Activated T-helper 1 cell treated with anti-CD3 and anti-CD28 coated beads, Interleukin-12 subunit alpha, Interleukin-12 subunit beta, Interleukin-2, Interleukin-4 antibody, amounts not matched to agents 30 ng/mL and 10 ng/mL and 1 ng/mL, durations not matched to agents 14 hours and 24 hours and 36 hours (primary cell): ENCODE measurements at regions of chr4 and their contacts with region 1.

Region 1: DNA sequence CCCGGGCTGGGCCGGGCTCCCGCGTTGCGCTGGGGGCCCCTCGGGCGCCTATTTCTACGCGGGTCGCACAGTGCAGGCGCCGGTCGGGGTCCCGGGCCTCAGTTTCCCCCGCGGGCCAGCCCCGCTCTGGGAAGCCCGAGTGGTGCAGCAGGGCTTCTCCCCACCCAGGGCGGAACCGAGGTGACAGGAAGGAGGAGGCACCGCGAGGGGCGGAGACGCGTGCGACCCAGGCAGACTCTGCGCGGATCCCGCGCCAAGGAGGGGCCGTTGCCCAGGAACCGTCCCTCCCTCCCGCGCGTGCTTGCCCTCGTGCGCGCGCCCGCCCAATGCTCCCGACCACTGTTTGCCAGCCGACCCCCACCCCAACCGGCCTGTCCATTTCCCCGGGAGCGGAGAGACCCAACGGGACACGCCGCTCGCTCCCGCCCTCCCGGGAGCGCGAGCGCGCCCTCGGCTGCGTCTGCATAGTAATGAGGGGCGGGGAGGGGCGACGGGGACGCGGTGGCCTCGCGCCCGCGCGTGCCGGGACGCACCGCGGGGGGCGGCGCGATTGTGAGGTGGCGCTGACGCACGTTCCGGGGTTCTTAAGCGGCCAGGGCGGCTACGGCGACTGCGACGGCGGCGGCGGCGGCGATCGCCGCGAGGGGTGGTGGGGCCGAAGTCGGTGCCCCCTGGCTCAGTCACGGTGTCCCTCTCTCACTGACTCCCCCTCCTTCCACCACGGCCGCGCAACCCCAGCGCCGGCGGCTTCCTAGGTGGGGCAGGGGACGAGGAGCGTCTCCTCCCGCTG is at the start of gene CPEB2:
- DNase-seq: peak; percentile 88
- H3K4me3 Mint-ChIP-seq: peak within 1 kb of the TSS; percentile 92
- H3K27ac Mint-ChIP-seq: peak within 1 kb of the TSS; percentile 93
- H3K4me1 Mint-ChIP-seq: peaks cover 20% of the 10 kb centered on the region
- H3K27me3 Mint-ChIP-seq: no peaks in the 10 kb centered on the region
- total RNA-seq, gene CPEB2: 16.5 and 17.2 TPM in 2 replicates

Region 2: DNA sequence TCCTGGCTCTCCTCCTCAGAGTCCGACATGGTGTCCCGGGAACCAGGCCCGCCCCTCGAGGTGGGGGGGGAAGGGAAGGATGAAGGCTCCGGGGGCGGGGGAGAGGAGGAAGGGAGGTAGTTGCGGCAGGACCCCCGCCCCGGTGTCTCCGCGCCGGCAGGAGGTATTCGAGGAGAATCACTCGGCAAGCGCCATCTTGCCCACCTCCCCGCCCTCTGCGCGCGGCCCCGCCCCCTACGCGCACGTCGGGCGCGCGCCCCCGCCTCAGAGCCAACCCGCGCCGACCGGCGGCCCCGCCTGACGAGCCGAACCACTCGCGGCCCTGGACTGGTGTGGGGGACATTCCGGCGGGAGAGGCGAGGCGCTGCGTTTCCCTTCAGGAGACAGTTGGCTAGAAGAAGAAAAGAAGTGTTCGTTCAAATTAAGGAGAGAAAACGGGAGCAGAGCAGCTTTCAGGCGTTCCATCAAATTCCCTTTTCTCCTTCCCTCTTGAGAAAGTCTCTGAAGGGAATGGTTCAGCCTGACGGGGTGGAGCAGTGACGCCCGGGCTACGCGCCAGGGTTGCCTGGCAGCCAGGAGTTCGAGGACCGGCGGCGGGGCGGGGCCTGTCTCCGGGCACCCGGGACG is 1517.8 kb before region 1 on chr4 and contains the start of gene RAB28:
- intact Hi-C with region 1: loop called (anchors 2 kb)
- DNase-seq: peak; percentile 90
- H3K4me3 Mint-ChIP-seq: peak within 1 kb of the TSS; percentile 91
- H3K27ac Mint-ChIP-seq: peak within 1 kb of the TSS; percentile 96
- H3K4me1 Mint-ChIP-seq: peaks cover 26% of the 10 kb centered on the region
- H3K27me3 Mint-ChIP-seq: peaks cover 16% of the 10 kb centered on the region
- total RNA-seq, gene RAB28: 19.3 and 22.2 TPM in 2 replicates

Region 3: DNA sequence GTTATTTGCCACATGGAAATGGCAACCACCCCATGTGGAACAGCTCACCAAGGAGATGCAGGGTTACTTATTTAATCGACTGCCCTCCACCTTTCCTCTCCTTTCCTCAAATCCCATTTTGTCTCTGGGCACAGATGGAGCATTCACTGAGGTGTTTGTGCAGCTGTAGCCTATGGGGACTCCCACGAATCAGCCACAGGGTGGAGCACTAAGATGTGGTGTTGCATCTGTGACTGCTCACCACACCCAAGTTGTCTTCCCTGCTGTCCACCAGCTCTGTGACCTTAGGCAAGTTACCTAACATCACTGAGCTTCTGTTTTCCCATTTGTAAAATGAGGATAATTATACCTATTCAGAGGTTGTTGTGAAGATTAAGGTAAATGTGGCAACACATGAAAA is 252.2 kb before region 1 on chr4:
- intact Hi-C with region 1: loop called (anchors 1 kb)
- DNase-seq: no peak
- H3K4me3 Mint-ChIP-seq: no peak overlapping the region
- H3K27ac Mint-ChIP-seq: no peak overlapping the region
- H3K4me1 Mint-ChIP-seq: no peaks in the 10 kb centered on the region
- H3K27me3 Mint-ChIP-seq: peaks cover 2% of the 10 kb centered on the region

Region 4: GRCh38 chr4:14800977-14801376 is 201.1 kb before region 1 on chr4:
- intact Hi-C with region 1: no loop called
- DNase-seq: no peak
- H3K4me3 Mint-ChIP-seq: no peak overlapping the region
- H3K27ac Mint-ChIP-seq: no peak overlapping the region
- H3K4me1 Mint-ChIP-seq: no peaks in the 10 kb centered on the region
- H3K27me3 Mint-ChIP-seq: peaks cover 4% of the 10 kb centered on the region

Region 5: DNA sequence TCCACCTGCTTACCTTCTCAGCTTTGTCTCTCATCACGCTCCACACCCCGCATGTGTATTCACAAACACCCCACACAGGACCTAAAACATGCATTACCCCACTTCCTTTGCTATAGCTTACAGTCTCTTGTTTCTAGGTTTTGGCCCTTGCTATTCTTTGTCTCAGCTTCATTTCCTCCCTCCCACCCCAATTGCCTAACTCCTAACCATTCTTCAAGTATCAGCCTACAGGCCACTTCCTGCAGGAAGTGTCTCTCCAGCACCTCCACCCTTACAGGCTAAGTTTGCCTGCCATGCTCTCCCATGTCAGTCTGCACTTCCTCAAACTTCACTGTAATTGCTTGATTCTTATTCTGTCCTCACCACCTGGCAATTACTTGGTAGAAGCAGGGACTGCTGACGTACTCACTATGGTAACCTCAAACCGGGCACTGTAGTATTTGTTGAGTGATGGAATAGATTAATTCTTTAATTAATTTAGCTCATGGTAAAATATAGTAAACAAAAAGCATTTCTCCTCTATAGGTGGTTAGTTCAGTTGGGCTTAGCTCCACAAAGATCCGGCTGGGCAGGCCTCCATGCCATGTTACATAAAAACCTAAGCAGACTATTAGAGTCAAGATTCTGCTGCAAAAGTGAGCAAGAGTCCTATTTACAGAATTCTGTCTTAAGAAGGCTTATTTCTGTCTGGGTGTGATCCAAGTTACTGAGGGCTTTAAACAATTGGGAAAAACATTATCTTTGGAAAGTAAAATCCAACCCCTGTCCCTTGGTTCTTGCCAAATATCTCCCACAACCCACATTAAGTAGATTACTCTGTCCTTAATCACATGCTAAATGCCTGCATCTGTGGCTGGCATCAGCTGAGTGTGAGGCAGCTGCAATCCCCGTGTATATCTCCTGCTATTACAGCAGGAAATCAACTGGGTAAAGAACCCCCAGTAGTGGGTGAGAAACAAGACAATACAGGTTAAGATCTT is 124.5 kb before region 1 on chr4:
- intact Hi-C with region 1: loop called (anchors 5 kb)
- DNase-seq: no peak
- H3K4me3 Mint-ChIP-seq: peak overlapping the region; percentile 27
- H3K27ac Mint-ChIP-seq: peak overlapping the region; percentile 64
- H3K4me1 Mint-ChIP-seq: peaks cover 29% of the 10 kb centered on the region
- H3K27me3 Mint-ChIP-seq: no peaks in the 10 kb centered on the region

Region 6: DNA sequence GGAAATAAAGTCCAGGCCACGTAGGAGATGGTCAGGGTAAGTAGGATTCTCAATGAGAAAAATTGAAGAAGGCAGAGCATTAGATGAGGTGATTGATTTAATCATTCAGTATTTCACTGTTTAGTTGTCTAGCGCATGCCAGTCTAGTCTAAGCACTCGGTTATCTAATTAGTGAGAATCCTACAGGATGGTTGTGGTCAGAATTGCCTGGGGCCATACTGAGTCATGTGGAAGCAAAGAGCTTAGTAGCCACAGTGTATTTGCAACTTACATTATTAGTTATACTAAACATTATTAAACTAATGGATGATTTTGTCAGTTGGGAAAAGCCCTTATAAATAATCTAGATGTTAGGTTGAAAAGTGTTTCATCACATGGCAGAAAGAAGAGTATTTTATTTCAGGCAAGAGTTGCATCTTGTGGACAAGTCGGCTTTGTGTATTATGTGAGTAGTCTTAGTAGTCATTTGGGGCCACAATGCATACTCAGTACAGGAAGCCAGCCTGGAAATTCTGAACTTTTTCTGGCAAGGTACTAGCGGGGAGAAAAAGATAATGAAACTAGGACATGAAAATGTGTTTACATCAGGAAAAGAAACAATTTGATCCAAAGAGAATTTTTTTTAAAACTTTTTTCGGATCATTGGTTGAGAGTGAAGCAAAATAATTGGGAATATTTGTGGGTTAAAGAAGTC is 32.2 kb after region 1 on chr4:
- intact Hi-C with region 1: loop called (anchors 2 kb)
- DNase-seq: no peak
- H3K4me3 Mint-ChIP-seq: no peak overlapping the region
- H3K27ac Mint-ChIP-seq: no peak overlapping the region
- H3K4me1 Mint-ChIP-seq: peaks cover 25% of the 10 kb centered on the region
- H3K27me3 Mint-ChIP-seq: no peaks in the 10 kb centered on the region

Region 7: DNA sequence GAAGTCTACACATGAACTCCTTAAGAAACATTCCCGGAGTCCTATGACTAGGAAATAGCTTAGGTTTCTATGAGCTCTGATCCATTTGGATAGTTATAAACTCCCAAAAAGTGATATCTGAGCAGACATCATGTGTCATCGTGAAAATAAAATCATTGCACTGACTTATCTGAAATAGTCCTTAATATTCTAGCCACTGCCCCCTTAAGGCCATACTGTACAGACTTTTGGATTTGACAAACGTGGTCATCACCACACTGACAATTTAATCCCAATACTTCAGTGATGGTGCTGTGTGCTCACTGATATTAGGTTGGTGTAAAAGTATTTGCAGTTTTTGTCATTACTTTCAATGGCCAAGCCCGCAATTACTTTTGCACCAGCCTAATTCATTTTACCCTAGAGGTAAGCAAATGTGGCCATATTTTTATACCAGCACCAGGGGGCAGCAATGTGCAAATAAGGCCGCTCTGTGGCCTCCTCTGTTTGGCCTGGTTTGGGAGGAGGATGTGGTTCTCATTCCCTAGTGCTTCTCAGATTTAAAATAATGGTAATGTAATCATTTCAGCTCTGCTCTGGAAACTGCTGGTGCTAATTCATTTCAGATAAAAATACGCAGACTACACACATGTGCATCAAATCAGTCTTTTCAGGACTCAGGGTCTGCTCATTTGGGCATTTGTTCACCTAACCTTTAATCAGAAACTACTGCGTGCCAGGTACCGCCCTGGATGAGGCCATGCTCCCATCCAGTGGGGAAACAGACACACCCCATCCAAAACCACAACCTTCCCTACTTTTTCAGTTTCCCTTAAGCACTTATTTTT is 229.4 kb after region 1 on chr4:
- intact Hi-C with region 1: loop called (anchors 5 kb)
- DNase-seq: peak; percentile 53
- H3K4me3 Mint-ChIP-seq: no peak overlapping the region
- H3K27ac Mint-ChIP-seq: no peak overlapping the region
- H3K4me1 Mint-ChIP-seq: peaks cover 28% of the 10 kb centered on the region
- H3K27me3 Mint-ChIP-seq: no peaks in the 10 kb centered on the region

Region 8: DNA sequence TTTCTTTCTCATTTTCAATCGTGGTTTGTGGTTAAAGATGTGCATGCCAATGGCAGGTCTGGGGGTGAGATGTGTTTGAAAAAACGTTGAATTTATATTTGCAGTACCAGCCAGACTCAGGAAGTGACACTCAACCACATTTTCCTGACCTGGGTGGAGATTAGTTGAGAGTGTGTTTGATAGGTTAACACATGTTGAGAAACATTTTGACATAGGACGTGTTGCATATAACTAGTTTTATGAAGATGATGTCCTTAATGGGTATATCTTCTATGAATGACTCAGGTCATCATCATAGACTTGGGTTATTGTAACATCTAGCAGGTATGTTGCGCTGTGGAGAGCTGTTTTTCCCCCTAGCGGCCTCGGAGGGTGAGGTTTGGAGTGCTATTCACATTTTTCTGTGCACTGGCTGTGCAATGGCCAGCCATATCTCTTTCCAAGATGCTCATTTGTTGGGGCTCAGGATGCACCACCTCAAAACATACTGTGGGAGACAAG is 754.3 kb after region 1 on chr4:
- intact Hi-C with region 1: loop called (anchors 5 kb)
- DNase-seq: peak; percentile 73
- H3K4me3 Mint-ChIP-seq: peak overlapping the region; percentile 76
- H3K27ac Mint-ChIP-seq: peak overlapping the region; percentile 94
- H3K4me1 Mint-ChIP-seq: peaks cover 54% of the 10 kb centered on the region
- H3K27me3 Mint-ChIP-seq: no peaks in the 10 kb centered on the region